GM12878 (cell line): ENCODE measurements at regions of chr20 and their contacts with region 1.

Region 1: DNA sequence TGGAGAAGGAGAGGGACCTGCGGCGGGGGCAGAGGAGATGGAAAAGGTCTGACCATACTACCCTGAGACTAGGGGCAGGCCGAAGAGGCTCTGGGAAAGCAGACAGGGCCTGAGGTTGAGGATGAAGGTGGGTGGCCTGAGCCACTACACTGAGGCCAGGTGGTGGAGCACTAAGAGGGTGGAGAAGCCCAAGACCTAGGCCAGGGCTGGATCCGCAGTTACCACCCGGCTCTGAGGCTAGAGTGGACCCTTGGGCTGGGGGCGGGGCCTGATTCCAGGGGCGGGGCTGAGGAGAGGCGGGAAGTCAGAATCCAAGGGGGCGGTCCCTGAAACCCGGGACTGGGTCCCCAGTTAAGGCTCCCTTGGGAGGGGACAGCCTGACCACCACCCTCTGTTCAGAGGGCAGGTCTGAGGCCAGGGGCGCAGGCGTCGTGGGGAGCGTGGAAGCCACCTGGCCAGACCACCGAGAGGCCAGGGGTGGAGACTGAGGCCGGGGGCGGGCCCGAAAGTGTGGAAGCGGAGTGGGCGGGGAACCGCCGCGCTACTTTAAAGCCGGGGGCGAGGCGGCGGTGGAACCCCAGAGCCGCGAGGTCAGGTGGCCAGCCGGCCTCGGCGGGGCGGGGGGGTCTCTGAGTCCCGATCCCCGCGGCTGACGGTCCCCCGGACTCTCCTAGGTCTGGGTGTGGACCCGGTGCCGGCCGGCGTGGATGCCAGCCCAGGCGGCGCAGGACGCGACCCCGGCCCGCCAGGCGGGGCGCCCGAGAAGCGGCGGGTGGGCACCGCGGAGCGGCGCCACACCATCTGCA is 8.2 kb downstream of the CCM2L start:
- DNase-seq: no peak
- ATAC-seq: peak; percentile 74
- H3K4me3 ChIP-seq: peak overlapping the region; percentile 53; the same call in 1 of the 2 replicates
- H3K27ac ChIP-seq: no peak overlapping the region
- H3K4me1 ChIP-seq: no peaks in the 10 kb centered on the region
- H3K27me3 ChIP-seq: peaks cover 8 to 12% of the 10 kb centered on the region in 2 experiments
- CTCF ChIP-seq: no peak
- EP300 ChIP-seq: no peak
- POLR2A ChIP-seq: no peak
- RAD21 ChIP-seq: no peak

Region 2: DNA sequence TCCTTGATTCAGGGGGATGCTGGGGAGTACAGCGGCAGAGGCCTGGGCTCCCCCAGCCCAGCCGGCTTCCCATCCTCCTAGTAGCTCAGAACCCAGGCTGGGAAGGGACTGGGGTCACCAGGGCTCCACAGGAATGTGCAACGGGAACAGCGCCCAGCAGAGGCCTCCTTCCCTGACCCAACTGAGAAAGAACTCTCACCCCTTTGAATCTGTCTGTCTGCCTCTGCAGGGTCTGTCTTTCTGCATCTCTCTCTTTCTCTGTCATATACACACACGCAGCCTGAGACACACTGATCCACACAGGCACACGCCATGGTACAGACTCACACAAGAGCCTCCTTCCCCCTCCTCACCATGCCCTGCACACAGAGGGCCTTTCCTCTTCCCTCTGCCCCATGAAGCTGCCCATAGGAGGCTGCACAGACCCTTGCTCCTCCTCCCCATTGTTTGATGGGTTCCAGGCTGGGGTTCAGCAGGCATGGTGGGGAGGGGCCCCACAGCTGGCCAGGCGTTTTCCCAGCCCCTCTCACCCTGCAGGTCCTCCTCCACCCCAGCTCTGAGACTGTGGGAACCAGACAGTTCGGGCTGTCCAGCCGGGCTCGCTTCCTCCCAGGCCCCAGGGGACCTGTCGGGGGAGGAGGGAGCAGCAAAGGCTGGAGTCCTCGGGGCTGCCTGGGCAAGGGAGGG is 175.9 kb before region 1 on chr20:
- CTCF ChIA-PET with region 1: interaction called, 3 read pairs
- POLR2A ChIA-PET with region 1: no interaction called
- RAD21 ChIA-PET with region 1: no interaction called
- SMC1A ChIA-PET with region 1: no interaction called
- in situ Hi-C with region 1: no loop called
- intact Hi-C with region 1: loop called (anchors 5 kb)
- DNase-seq: no peak
- ATAC-seq: peak; percentile 24
- H3K4me3 ChIP-seq: no peak overlapping the region
- H3K27ac ChIP-seq: no peak overlapping the region
- H3K4me1 ChIP-seq: peaks cover 5% of the 10 kb centered on the region; the same call in 1 of the 2 replicates
- H3K27me3 ChIP-seq: no peaks in the 10 kb centered on the region
- CTCF ChIP-seq: no peak
- EP300 ChIP-seq: no peak
- POLR2A ChIP-seq: no peak
- RAD21 ChIP-seq: no peak